Activated CD4-positive, alpha-beta memory T cell treated with anti-CD3 and anti-CD28 coated beads for 36 hours (primary cell): ENCODE measurements at regions of chr2 and their contacts with region 1.

Region 1: DNA sequence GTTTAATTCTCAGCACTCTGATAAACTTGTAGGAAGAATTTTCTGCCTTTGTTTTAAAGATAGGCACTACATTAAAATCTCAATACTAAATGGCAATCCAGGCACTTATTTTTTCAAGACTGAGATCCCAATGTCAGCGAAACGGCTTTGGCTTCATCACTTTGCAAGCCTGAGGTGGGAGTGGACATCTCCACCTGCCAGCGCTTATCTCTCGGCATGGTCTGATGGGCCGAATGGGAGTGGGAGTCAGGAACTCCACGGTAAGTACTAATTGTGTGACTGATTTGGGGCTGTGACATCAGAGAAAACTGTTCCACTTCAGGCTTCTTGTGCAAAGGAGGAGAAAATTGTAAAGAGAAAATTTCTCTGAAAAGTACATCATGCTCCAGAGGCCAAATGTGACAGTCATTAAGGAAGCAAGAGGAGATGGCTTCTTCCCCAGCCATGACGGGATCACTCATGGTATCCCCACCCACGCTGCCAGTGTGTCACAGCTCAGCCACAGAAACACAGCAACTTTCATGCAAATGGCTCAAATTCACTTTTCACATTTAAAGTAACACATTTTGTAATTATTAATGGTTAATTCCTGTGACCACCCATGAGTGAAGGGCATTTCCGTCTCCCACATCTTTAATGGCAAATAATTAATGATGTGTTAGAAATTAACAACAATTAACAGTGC is 385.5 kb upstream of the HNRNPA3 start:
- DNase-seq: peak; percentile 76
- H3K4me3 Mint-ChIP-seq: no peak overlapping the region
- H3K27ac Mint-ChIP-seq: peak overlapping the region; percentile 71
- H3K4me1 Mint-ChIP-seq: peaks cover 22% of the 10 kb centered on the region
- H3K27me3 Mint-ChIP-seq: peaks cover 10% of the 10 kb centered on the region

Region 2: GRCh38 chr2:176854878-176855277 is 27.8 kb after region 1 on chr2:
- CTCF ChIA-PET with region 1: no interaction called
- POLR2A ChIA-PET with region 1: no interaction called
- intact Hi-C with region 1: loop called (anchors 2 kb)
- DNase-seq: no peak
- H3K4me3 Mint-ChIP-seq: no peak overlapping the region
- H3K27ac Mint-ChIP-seq: no peak overlapping the region
- H3K4me1 Mint-ChIP-seq: peaks cover 19% of the 10 kb centered on the region
- H3K27me3 Mint-ChIP-seq: peaks cover under 1% of the 10 kb centered on the region

Region 3: DNA sequence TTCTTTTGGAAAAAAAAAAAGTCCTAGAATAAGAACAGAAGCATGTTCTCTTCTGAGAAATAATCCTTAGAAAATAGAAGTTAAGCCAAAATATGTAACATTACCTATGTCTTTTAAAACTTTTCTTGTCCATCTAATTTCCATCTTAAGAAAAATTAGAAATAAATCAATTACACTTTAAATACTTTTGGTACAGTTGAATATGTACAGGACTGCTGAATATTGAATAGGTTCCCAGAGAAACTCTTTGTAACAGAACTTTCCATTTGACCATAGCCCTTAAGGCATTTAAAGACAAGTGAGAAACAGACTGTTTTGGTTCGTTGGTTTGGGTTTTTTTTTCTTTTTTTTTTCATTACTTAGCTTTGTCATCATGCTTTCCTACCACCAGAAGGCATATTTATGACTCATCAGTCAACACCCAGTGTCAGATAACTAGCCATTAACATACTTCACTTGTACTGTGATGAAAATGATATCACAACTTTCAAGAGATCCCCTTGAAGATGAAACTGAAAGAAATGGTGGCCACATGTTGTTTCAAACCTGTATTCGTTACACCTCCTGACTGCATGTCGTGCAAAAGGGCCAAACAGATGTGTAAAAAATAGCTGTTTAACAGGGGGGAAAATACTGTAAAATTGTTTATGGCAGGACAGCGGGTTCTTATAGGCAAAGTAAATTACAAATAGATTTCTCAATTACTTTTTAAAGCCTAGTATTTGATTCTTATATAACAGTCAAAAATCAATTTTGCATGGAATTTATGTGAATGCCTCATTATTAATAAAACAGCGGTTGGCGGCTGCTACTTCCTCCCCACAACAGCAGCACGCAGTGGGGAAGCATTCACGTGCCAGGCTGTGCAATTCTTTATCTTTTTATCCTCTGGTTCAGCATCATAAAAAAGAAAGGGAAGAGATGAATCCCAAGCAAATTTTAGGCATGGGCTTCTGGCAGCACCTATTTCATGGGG is 104.8 kb after region 1 on chr2:
- CTCF ChIA-PET with region 1: no interaction called
- POLR2A ChIA-PET with region 1: no interaction called
- intact Hi-C with region 1: loop called (anchors 2 kb)
- DNase-seq: peak; percentile 27
- H3K4me3 Mint-ChIP-seq: no peak overlapping the region
- H3K27ac Mint-ChIP-seq: peak overlapping the region; percentile 20
- H3K4me1 Mint-ChIP-seq: peaks cover 13% of the 10 kb centered on the region
- H3K27me3 Mint-ChIP-seq: peaks cover 1% of the 10 kb centered on the region

Region 4: GRCh38 chr2:176997074-176997791 is 170.1 kb after region 1 on chr2:
- CTCF ChIA-PET with region 1: no interaction called
- POLR2A ChIA-PET with region 1: no interaction called
- intact Hi-C with region 1: loop called (anchors 5 kb)
- DNase-seq: peak; percentile 34
- H3K4me3 Mint-ChIP-seq: no peak overlapping the region
- H3K27ac Mint-ChIP-seq: peak overlapping the region; percentile 18
- H3K4me1 Mint-ChIP-seq: peaks cover 19% of the 10 kb centered on the region
- H3K27me3 Mint-ChIP-seq: no peaks in the 10 kb centered on the region

Region 5: DNA sequence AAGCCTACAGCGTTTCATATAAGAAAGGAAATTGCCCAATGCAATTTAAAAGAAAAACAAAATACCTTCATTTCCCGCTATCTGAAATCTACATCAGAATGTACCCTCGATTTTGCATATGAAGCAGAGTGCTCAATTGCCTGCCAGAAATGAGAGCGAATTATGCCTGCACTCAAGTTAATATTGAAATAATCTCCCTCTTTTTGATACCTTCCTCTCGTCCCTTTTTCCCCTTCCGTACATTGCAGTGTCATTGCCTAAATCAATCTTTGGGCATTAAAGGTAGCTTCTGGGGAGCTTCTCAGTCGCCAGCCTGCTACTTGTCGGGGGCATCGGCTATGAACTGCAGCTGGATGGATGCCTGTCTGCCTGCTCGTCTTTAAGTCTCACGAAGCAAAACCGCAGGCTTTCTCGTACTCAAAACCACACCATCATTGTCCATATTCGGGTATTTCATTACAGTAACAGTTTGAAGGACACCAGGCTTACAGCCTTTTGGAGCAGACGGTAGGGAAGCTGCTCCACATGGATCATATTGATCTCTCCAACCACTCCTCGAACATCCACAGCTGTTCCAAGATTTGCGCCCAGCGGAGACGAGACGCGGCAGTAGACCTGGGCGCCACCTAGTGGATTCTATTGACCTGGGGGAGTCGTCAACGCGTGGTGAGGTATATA is 321.5 kb after region 1 on chr2:
- CTCF ChIA-PET with region 1: interaction called, 6 read pairs
- POLR2A ChIA-PET with region 1: no interaction called
- intact Hi-C with region 1: loop called (anchors 5 kb)
- DNase-seq: peak; percentile 81
- H3K4me3 Mint-ChIP-seq: peak overlapping the region; percentile 78
- H3K27ac Mint-ChIP-seq: no peak overlapping the region
- H3K4me1 Mint-ChIP-seq: peaks cover 12% of the 10 kb centered on the region
- H3K27me3 Mint-ChIP-seq: peaks cover 20% of the 10 kb centered on the region